Dendritic cell treated with granulocyte-macrophage colony-stimulating factor and Interleukin-4, amounts not matched to agents 40 ng/mL and 50 ng/mL, for 4 days (primary cell): ENCODE measurements at regions of chrX and their contacts with region 1.

Region 1: DNA sequence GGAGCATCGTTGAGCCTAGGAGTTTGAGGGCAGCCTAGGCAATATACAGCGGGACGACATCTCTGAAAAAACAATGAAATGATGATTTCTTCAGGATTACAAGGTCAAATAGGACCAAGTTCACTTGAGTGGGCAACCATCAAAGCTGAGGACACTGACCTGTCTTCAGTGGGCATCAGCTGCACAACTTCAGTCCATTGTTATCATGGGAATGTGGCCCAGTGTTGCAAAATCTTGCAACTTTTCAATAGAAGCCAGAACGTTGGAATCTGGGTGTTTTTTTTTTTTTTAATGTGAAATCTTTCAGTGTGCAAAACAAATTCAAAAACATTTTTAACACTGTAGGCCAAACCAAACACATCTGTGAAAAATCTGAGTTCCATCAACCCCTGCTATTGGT is 155.4 kb upstream of the PLAC1 start:
- H3K4me3 Mint-ChIP-seq: no peak overlapping the region
- H3K27ac Mint-ChIP-seq: no peak overlapping the region
- H3K4me1 Mint-ChIP-seq: no peaks in the 10 kb centered on the region
- H3K27me3 Mint-ChIP-seq: no peaks in the 10 kb centered on the region

Region 2: GRCh38 chrX:134734466-134734952 is 79.2 kb before region 1 on chrX:
- intact Hi-C with region 1: no loop called
- H3K4me3 Mint-ChIP-seq: no peak overlapping the region
- H3K27ac Mint-ChIP-seq: peak overlapping the region; percentile 27
- H3K4me1 Mint-ChIP-seq: peaks cover 30% of the 10 kb centered on the region
- H3K27me3 Mint-ChIP-seq: peaks cover 7% of the 10 kb centered on the region

Region 3: GRCh38 chrX:134898440-134898839 is 84.7 kb after region 1 on chrX:
- intact Hi-C with region 1: loop called (anchors 10 kb)
- H3K4me3 Mint-ChIP-seq: no peak overlapping the region
- H3K27ac Mint-ChIP-seq: no peak overlapping the region
- H3K4me1 Mint-ChIP-seq: no peaks in the 10 kb centered on the region
- H3K27me3 Mint-ChIP-seq: no peaks in the 10 kb centered on the region

Region 4: DNA sequence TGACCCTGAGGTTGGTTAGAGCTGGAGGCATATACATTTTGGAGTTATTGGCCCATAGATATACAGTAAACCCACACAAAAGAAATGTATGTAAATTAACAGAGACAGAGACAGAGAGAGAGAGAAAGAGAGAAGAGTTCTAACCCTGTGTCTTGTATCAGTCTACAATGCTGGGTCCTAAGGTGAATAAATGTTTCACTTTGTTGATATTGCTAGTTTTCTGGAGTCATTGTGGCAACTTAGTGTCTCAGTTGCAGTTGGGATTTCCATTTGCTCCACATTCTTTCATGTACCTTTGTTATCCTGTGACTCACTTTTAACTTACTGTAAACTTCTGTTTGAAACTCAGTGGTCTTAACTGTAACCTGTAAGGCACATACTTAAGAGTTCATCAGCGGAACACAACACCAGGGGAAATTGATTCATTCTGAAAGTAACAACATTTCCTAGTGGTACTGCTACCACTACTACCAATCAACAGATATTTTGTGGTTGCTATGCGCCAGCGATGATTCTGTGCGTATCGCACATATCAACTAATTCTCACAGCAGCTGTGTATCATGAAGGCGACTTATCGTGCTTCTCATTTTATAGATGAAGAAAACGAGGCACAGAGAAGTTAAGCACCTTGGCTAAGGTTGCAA is 399.6 kb after region 1 on chrX:
- intact Hi-C with region 1: no loop called
- H3K4me3 Mint-ChIP-seq: no peak overlapping the region
- H3K27ac Mint-ChIP-seq: no peak overlapping the region
- H3K4me1 Mint-ChIP-seq: no peaks in the 10 kb centered on the region
- H3K27me3 Mint-ChIP-seq: peaks cover 4% of the 10 kb centered on the region